ENCODE measurements at regions of chr7 and their contacts with region 1.

Region 1: GRCh38 chr7:129163875-129164544 is 19.5 kb downstream of the TSPAN33 start:
- DNase-seq: no peak
- H3K4me3 ChIP-seq: no peak overlapping the region
- H3K27ac ChIP-seq: no peak overlapping the region
- H3K4me1 ChIP-seq: peaks cover 0 to 6% of the 10 kb centered on the region in 2 donors
- H3K27me3 ChIP-seq: no peaks in the 10 kb centered on the region
- CTCF ChIP-seq: peak; percentile 20 to 81 (median 79)

Region 2: GRCh38 chr7:129210256-129210988 is 46.4 kb after region 1 on chr7:
- intact Hi-C with region 1: loop called (anchors 1 kb)
- DNase-seq: peak in 1 of 2 donors; percentile 88
- H3K4me3 ChIP-seq: no peak overlapping the region
- H3K27ac ChIP-seq: no peak overlapping the region
- H3K4me1 ChIP-seq: no peaks in the 10 kb centered on the region
- H3K27me3 ChIP-seq: no peaks in the 10 kb centered on the region
- CTCF ChIP-seq: peak; percentile 79 to 93 (median 89)

Measured in ascending aorta (tissue), 2 donors.